ENCODE measurements at regions of chr18 and their contacts with region 1.

Region 1: DNA sequence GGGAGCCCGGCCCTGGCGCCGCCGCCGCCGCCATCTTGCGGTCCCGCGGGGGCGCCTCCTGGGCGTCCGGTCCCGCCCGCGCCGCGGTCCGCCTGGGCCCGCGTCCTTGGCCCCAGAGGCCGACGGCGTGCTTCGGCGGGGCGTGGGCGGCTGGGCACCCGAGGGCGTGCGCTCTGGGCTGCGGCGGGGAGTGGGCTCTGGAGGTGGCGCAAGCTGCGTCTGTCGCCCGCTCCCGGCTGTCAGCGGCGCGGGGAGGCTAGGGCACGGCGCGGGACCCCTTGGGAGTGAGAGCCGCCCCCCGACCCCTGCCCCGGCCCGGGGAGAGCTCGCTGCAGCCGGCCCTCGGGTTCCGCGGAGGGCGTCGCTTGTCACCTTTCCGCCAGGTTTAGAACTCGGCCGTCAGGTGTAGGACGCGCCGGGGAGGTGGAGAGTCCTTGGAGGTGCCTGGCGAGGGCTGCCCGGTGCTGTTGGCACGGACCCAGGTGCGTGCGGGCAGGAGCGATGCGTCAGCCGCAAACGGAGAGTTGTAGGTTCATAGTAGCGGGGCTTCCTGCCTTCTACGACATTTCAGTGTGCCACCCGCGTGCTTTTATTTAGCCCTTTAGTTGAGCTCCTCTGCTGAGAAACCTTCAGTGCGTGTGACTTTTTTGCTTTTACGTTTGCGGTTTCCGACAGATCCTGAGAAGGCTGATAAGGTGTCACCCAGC is 921 bp downstream of the VAPA start:
- DNase-seq: peak; percentile 73 to 83
- H3K4me3 ChIP-seq: peak overlapping the region; percentile 91 to 97 (median 91)
- H3K27ac ChIP-seq: peak overlapping the region; percentile 99 to 100
- H3K4me1 ChIP-seq: peaks cover 4 to 17% of the 10 kb centered on the region in 2 donors
- H3K27me3 ChIP-seq: no peaks in the 10 kb centered on the region
- CTCF ChIP-seq: no peak
- POLR2A ChIP-seq: no peak

Region 2: GRCh38 chr18:10514082-10514481 is 599.3 kb after region 1 on chr18:
- intact Hi-C with region 1: loop called (anchors 5 kb)
- DNase-seq: no peak
- H3K4me3 ChIP-seq: no peak overlapping the region
- H3K27ac ChIP-seq: peak overlapping the region; percentile 59 to 67
- H3K4me1 ChIP-seq: peaks cover 0 to 6% of the 10 kb centered on the region in 2 donors
- H3K27me3 ChIP-seq: no peaks in the 10 kb centered on the region
- CTCF ChIP-seq: no peak
- POLR2A ChIP-seq: no peak

Region 3: GRCh38 chr18:11826836-11827235 is 1912.1 kb after region 1 on chr18:
- intact Hi-C with region 1: no loop called
- DNase-seq: no peak
- H3K4me3 ChIP-seq: no peak overlapping the region
- H3K27ac ChIP-seq: no peak overlapping the region
- H3K4me1 ChIP-seq: no peaks in the 10 kb centered on the region
- H3K27me3 ChIP-seq: no peaks in the 10 kb centered on the region
- CTCF ChIP-seq: no peak
- POLR2A ChIP-seq: no peak

Measured in breast epithelium (tissue), 4 donors.